AG04449 (cell line): ENCODE measurements at regions of chr6 and their contacts with region 1.

Region 1: GRCh38 chr6:116287689-116288282 is 8.1 kb upstream of the TSPYL1 start:
- DNase-seq: no peak
- H3K4me3 ChIP-seq: no peak overlapping the region
- CTCF ChIP-seq: peak; percentile 69

Region 2: GRCh38 chr6:116298973-116299372 is 11.2 kb after region 1 on chr6:
- CTCF ChIA-PET with region 1: interaction called, 23 read pairs
- POLR2A ChIA-PET with region 1: no interaction called
- DNase-seq: no peak
- H3K4me3 ChIP-seq: no peak overlapping the region
- CTCF ChIP-seq: no peak

Region 3: DNA sequence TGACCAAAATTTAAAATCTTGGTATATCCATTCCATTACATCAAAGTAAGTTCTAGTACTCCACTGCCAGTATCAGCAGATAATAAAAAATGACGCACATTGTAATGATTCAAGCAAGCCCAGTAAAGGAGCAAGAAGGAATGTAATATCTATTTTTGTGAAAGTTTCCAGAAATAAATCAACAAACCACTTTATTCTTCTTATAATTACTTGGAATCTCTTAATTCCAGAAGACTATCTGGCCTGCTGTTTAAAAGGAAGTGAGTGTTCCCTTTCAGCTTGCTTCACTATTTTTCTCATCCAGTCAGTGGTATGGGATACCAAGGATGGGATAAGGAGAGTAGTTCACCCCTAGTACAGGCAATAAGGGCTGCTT is 40.7 kb after region 1 on chr6:
- CTCF ChIA-PET with region 1: interaction called, 15 read pairs
- POLR2A ChIA-PET with region 1: no interaction called
- DNase-seq: no peak
- H3K4me3 ChIP-seq: no peak overlapping the region
- CTCF ChIP-seq: no peak

Region 4: GRCh38 chr6:116395647-116396046 is 107.9 kb after region 1 on chr6:
- CTCF ChIA-PET with region 1: interaction called, 11 read pairs
- POLR2A ChIA-PET with region 1: no interaction called
- DNase-seq: no peak
- H3K4me3 ChIP-seq: no peak overlapping the region
- CTCF ChIP-seq: no peak

Region 5: GRCh38 chr6:116424001-116424400 is 136.2 kb after region 1 on chr6:
- CTCF ChIA-PET with region 1: interaction called, 26 read pairs
- POLR2A ChIA-PET with region 1: no interaction called
- DNase-seq: no peak
- H3K4me3 ChIP-seq: no peak overlapping the region
- CTCF ChIP-seq: no peak

Region 6: GRCh38 chr6:116511404-116512110 is 223.8 kb after region 1 on chr6 and contains the start of gene CALHM5:
- CTCF ChIA-PET with region 1: interaction called, 35 read pairs
- POLR2A ChIA-PET with region 1: no interaction called
- DNase-seq: peak; percentile 46
- H3K4me3 ChIP-seq: peak within 1 kb of the TSS; percentile 59
- CTCF ChIP-seq: peak; percentile 53